ENCODE measurements at regions of chr20 and their contacts with region 1.

Region 1: DNA sequence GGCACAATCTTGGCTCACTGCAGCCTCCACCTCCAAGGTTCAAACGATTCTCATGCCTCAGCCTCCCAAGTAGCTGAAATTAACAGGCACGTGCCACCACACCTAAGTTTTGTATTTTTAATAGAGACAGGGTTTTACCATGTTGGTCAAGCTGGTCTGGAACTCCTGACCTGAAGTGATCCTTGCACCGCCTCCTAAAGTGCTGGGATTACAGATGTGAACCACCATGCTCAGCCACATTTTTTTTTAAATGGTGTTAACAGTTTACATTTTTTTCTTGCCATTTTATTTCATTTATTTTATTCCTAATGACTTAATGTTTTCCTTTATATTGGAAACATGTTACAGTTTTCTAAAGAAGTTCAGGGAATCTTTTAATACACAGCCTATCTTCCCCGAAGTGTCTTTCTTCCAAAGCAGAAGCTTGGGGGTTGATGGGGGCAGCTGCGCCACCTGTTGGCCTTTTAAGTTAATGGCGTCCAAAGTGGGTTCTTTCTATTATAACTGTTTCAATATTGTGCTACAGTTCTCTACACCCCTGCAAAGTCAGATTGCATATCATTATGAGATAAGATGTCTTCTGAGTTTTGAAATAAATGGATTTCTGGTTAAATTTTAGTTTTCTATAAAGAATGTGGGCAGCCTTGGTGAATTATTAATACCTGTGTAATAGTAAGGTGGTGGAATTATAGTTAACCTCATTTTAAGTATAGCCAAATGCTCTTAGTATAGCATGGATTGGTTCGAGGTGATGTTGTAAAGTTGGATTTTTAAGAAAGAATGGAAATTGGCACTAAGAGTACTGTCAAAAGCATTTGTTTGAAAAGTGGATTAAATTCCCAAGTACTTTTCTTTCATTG is 42.0 kb upstream of the PLCG1 start:
- DNase-seq: peak; percentile 63
- H3K4me3 Mint-ChIP-seq: no peak overlapping the region
- H3K27ac Mint-ChIP-seq: no peak overlapping the region
- H3K4me1 Mint-ChIP-seq: peaks cover 4% of the 10 kb centered on the region
- H3K27me3 Mint-ChIP-seq: no peaks in the 10 kb centered on the region

Region 2: GRCh38 chr20:40980106-40980827 is 115.1 kb before region 1 on chr20:
- CTCF ChIA-PET with region 1: interaction called, 252 read pairs
- POLR2A ChIA-PET with region 1: no interaction called
- DNase-seq: no peak
- H3K4me3 Mint-ChIP-seq: no peak overlapping the region
- H3K27ac Mint-ChIP-seq: no peak overlapping the region
- H3K4me1 Mint-ChIP-seq: peaks cover 2% of the 10 kb centered on the region
- H3K27me3 Mint-ChIP-seq: peaks cover 23% of the 10 kb centered on the region

Region 3: GRCh38 chr20:41110930-41111577 is 15.7 kb after region 1 on chr20:
- CTCF ChIA-PET with region 1: interaction called, 10 read pairs
- POLR2A ChIA-PET with region 1: no interaction called
- DNase-seq: no peak
- H3K4me3 Mint-ChIP-seq: no peak overlapping the region
- H3K27ac Mint-ChIP-seq: no peak overlapping the region
- H3K4me1 Mint-ChIP-seq: no peaks in the 10 kb centered on the region
- H3K27me3 Mint-ChIP-seq: no peaks in the 10 kb centered on the region

Measured in activated CD4-positive, alpha-beta memory T cell treated with anti-CD3 and anti-CD28 coated beads, Interleukin-2, amount 10 ng/mL, durations not matched to agents 7 days and 5 days (primary cell).